ENCODE measurements at regions of chr17 and their contacts with region 1.

Region 1: DNA sequence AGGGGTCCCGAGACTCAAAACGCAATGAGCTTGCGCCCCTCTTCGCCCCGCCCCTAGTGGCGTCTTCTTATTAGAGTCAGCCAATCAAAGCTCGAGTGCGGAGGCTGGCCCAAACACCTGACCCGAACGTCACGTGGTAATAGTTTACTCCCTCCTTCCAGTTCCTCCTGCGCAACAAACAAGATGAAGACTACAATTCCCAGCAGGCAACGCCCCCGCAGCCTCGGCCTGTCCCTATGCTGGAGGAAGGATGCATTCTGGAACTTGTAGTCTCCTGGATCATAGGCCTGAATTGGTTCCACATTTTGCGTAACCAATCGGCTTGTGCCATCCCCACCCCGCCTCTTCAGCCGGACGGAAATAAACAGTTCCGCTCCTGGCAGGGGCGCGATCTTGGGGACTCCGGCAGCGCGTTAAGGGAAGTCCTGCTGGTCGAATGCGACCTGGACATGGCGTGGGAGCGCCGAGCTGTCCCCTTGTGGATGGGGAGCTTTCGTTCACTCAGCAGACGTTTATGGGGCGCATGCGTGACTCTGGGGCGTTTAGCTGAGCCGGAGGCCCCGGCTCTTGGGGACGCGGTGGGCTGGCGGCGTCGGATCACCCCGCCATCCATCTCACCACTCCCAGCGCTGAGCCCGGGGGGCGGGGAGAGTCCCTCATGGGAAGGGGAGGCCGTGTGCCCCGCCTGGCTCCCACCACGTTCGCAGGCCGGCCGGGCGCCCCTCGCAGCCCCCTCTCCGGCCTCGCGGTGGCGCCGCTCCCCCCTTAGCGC is at the start of gene WBP2:
- DNase-seq: peak; percentile 95 to 100
- H3K4me3 ChIP-seq: peak within 1 kb of the TSS; percentile 81 to 95 (median 91)
- H3K27ac ChIP-seq: peak within 1 kb of the TSS; percentile 93
- H3K4me1 ChIP-seq: peaks cover 0 to 7% (median 2%) of the 10 kb centered on the region in 4 experiments; a peak in 4 of 7 replicates
- H3K27me3 ChIP-seq: no peaks in the 10 kb centered on the region
- CTCF ChIP-seq: peak; percentile 47 to 61 (median 48)
- EP300 ChIP-seq: peak in 1 of 2 experiments; percentile 4; a peak in 1 of 3 replicates
- POLR2A ChIP-seq: peak; percentile 79 to 93
- RAD21 ChIP-seq: peak in 1 of 2 experiments; percentile 38; a peak in 1 of 4 replicates
- total RNA-seq, gene WBP2: 61.8 and 71.2 TPM in 2 replicates

Region 2: DNA sequence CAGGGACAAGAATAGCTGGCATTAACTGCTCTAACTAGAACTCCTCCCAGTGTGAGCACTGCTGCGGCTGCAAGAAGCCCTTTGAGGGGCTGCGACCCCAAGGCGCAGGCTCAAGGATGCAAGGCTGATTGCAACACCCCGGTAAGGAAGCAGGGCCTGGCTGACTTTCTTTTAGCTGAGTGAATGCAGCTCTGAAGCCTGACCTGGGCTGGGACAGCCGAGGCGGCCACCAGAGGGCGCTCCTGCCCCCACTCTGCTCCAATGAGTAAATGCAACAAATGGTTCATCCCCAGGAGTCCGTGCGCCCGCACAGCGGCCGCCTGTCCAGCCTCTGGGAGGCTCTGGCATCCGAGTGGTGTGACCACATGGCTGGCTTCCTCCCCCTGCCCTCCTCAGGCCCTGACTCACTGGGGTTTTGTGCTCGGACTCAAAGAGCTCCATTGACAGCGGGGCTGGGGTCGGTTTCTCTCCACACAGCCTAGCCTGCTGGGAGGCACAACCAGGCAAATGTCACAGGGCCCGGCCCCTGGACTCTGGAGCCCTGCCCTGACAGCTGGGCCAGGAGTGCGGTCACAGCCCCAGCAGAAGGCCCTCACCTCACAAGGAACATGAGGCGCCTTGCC is 222.5 kb before region 1 on chr17 and contains the start of gene SMIM5:
- CTCF ChIA-PET with region 1: no interaction called
- POLR2A ChIA-PET with region 1: no interaction called
- DNase-seq: peak; percentile 75 to 97
- H3K4me3 ChIP-seq: peak within 1 kb of the TSS in 1 of 4 experiments; percentile 16; a peak in 3 of 8 replicates
- H3K27ac ChIP-seq: no peak within 1 kb of the TSS
- H3K4me1 ChIP-seq: peaks cover 0 to 16% (median 11%) of the 10 kb centered on the region in 4 experiments; a peak in 5 of 7 replicates
- H3K27me3 ChIP-seq: no peaks in the 10 kb centered on the region
- CTCF ChIP-seq: peak; percentile 93 to 95 (median 94)
- EP300 ChIP-seq: no peak
- POLR2A ChIP-seq: no peak
- RAD21 ChIP-seq: peak; percentile 58 to 70
- total RNA-seq, gene SMIM5: not detected in 2 replicates

Region 3: DNA sequence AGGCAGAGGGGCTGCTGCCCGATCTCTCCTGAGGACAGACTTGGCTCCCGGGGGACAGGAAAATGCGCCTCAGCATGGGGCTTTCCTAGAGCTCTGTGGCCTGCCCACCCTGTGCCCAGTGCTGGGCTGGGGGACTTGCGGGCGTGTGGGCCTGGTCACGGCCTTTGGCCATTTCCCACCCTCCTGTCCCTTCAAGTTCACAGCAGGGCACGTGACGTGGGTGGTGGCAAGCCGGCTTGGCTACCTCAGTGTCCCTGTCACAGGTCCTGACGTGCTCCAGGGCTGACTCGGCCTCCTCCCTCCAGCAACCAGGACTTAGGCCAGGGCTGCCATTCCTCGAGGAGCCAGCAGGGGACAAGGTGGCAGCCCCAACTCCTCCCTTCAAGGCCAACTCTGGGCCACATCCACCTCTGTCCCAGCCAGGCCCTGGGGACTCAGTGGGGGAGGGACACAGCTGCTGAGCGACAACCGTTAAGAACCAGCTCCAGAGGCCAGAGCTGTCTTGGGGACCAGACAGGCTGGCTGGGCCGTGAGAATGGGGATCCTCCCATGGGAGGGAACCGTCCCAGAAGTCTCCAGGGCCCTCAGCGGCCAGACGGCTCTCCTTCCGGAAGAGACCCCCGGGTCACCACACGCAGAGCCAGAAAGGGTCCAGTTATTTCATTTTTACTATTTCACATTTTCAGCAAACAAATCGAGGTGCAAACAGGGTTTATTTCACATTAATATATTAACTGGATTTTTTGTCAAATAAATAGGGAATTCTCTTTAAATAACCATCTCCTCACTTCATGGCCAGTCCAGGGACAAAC is 10.2 kb before region 1 on chr17:
- CTCF ChIA-PET with region 1: interaction called, 563 read pairs
- POLR2A ChIA-PET with region 1: interaction called, 28 read pairs
- DNase-seq: peak; percentile 57 to 87
- H3K4me3 ChIP-seq: no peak overlapping the region
- H3K27ac ChIP-seq: no peak overlapping the region
- H3K4me1 ChIP-seq: peaks cover 0 to 8% (median 6%) of the 10 kb centered on the region in 4 experiments; a peak in 4 of 7 replicates
- H3K27me3 ChIP-seq: no peaks in the 10 kb centered on the region
- CTCF ChIP-seq: peak; percentile 63 to 93 (median 82)
- EP300 ChIP-seq: no peak
- POLR2A ChIP-seq: no peak
- RAD21 ChIP-seq: peak in 1 of 2 experiments; percentile 49; a peak in 2 of 4 replicates

Region 4: DNA sequence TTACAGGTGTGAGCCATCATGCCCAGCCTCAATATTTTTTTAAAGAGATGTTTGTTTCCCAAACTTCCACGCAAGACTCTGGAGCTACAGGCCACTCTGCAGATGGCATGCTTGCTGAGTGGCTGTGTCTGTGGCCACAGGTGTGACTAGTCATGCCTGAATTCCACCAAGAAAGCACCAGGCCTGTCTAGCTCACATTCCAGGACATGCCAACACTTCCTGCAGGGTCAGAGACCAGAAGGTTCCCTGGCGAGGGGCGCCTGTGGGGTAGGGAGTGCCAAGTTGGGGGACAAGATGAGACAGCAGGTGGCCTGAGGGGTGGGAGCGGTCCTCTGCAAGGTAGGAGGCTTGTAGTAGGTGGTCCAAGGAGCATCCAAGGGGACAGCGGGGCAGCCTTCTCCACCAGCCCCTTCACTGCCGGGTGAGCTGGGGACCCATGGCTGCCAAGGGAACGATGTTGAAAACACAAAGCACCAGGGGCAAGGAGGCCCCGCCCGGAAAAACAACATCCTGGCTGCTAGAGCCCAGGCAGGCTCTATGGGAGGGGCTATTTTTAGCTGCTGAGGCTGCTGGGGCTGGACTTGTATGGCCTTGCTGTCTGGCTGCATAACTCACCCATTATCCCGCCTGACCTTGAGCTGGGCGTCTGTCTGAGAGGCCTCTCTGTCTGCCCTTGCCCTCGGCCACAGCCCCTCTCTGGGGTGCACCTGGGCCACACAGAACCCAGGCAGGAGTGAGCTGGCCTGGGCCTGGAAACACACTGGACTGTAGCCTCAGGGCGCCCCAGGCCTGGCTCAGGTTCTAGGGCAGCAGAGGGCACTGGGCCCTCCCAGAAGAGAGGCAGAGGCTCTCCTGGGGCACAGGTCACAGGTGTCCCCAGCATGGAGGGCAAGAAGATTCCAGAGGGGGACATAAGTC is 17.2 kb after region 1 on chr17:
- CTCF ChIA-PET with region 1: interaction called, 157 read pairs
- POLR2A ChIA-PET with region 1: interaction called, 21 read pairs
- DNase-seq: no peak
- H3K4me3 ChIP-seq: no peak overlapping the region
- H3K27ac ChIP-seq: peak overlapping the region; percentile 18; the same call in 1 of the 2 replicates
- H3K4me1 ChIP-seq: peaks cover 0 to 24% (median 13%) of the 10 kb centered on the region in 4 experiments; a peak in 6 of 7 replicates
- H3K27me3 ChIP-seq: peaks cover 5 to 16% (median 13%) of the 10 kb centered on the region in 4 experiments; a peak in 6 of 7 replicates
- CTCF ChIP-seq: no peak
- EP300 ChIP-seq: no peak
- POLR2A ChIP-seq: no peak
- RAD21 ChIP-seq: no peak

Region 5: GRCh38 chr17:75877752-75878173 is 22.3 kb after region 1 on chr17:
- CTCF ChIA-PET with region 1: interaction called, 157 read pairs
- POLR2A ChIA-PET with region 1: interaction called, 21 read pairs
- DNase-seq: peak in 1 of 2 experiments; percentile 87
- H3K4me3 ChIP-seq: peak overlapping the region; percentile 40 to 72 (median 66)
- H3K27ac ChIP-seq: no peak overlapping the region
- H3K4me1 ChIP-seq: peaks cover 0 to 22% (median 12%) of the 10 kb centered on the region in 4 experiments; a peak in 6 of 7 replicates
- H3K27me3 ChIP-seq: peaks cover 10 to 31% (median 24%) of the 10 kb centered on the region in 4 experiments
- CTCF ChIP-seq: peak; percentile 53 to 69 (median 57)
- EP300 ChIP-seq: no peak
- POLR2A ChIP-seq: no peak
- RAD21 ChIP-seq: peak; percentile 10 to 44; a peak in 1 of 4 replicates

Region 6: GRCh38 chr17:75889454-75889853 is 34.0 kb after region 1 on chr17:
- CTCF ChIA-PET with region 1: interaction called, 34 read pairs
- POLR2A ChIA-PET with region 1: interaction called, 4 read pairs
- DNase-seq: no peak
- H3K4me3 ChIP-seq: no peak overlapping the region
- H3K27ac ChIP-seq: no peak overlapping the region
- H3K4me1 ChIP-seq: peaks cover 0 to 5% (median 0%) of the 10 kb centered on the region in 4 experiments; a peak in 1 of 7 replicates
- H3K27me3 ChIP-seq: no peaks in the 10 kb centered on the region
- CTCF ChIP-seq: no peak
- EP300 ChIP-seq: no peak
- POLR2A ChIP-seq: no peak
- RAD21 ChIP-seq: no peak

Region 7: DNA sequence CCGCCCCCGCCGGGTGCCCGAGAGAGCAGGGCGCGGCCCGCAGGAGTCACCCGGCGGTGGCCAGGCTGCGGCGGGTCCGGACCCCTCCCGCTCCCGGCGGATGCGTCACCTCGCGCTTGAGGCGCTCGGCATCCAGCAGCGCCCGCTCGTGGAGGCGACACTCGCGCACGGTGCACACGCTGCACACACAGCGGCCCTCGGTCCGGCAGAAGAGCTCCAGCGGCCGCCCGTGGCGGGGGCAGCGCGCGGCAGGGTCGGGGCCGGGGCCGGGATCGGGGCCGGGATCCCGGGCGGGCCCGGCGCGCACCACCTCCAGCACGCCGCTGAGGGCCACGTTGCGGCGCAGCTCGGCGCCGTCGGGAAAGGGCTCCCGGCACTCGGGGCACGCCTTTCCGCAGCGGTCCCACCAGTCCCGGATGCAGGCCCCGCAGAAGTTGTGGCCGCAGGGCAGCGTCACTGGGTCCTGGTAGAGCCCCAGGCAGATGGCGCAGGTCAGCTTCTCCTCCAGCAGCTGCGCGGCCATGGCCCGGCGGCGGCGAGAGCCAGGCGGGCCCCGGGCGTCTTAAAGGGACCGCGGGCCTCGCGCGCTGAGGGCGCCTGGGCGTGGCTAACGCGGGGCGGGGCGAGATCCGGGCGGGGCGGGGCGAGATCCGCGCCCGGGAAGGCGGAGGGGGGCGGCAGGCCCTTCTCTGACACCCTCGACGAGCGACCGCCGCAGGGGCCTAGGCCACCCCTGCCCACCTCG is 41.1 kb after region 1 on chr17 and contains the start of gene TRIM65:
- CTCF ChIA-PET with region 1: interaction called, 34 read pairs
- POLR2A ChIA-PET with region 1: interaction called, 16 read pairs
- DNase-seq: peak in 1 of 2 experiments; percentile 92
- H3K4me3 ChIP-seq: peak within 1 kb of the TSS; percentile 58 to 96 (median 80)
- H3K27ac ChIP-seq: peak within 1 kb of the TSS; percentile 59; the same call in 1 of the 2 replicates
- H3K4me1 ChIP-seq: peaks cover 4 to 25% (median 13%) of the 10 kb centered on the region in 4 experiments
- H3K27me3 ChIP-seq: no peaks in the 10 kb centered on the region
- CTCF ChIP-seq: no peak
- EP300 ChIP-seq: no peak
- POLR2A ChIP-seq: peak; percentile 88 to 94
- RAD21 ChIP-seq: no peak
- total RNA-seq, gene TRIM65: 47.7 and 48.6 TPM in 2 replicates